Activated naive CD4-positive, alpha-beta T cell treated with anti-CD3 and anti-CD28 coated beads, Interleukin-2, amount 10 ng/mL, durations not matched to agents 7 days and 5 days (primary cell): ENCODE measurements at regions of chr10 and their contacts with region 1.

Region 1: GRCh38 chr10:13440185-13441061 is 88.4 kb downstream of the BEND7 start:
- DNase-seq: peak; percentile 69
- H3K4me3 Mint-ChIP-seq: peak overlapping the region; percentile 33
- H3K27ac Mint-ChIP-seq: no peak overlapping the region
- H3K4me1 Mint-ChIP-seq: peaks cover 14% of the 10 kb centered on the region
- H3K27me3 Mint-ChIP-seq: peaks cover 50% of the 10 kb centered on the region

Region 2: GRCh38 chr10:13371897-13372470 is 68.4 kb before region 1 on chr10:
- CTCF ChIA-PET with region 1: interaction called, 51 read pairs
- DNase-seq: peak; percentile 80
- H3K4me3 Mint-ChIP-seq: no peak overlapping the region
- H3K27ac Mint-ChIP-seq: no peak overlapping the region
- H3K4me1 Mint-ChIP-seq: no peaks in the 10 kb centered on the region
- H3K27me3 Mint-ChIP-seq: peaks cover 4% of the 10 kb centered on the region

Region 3: DNA sequence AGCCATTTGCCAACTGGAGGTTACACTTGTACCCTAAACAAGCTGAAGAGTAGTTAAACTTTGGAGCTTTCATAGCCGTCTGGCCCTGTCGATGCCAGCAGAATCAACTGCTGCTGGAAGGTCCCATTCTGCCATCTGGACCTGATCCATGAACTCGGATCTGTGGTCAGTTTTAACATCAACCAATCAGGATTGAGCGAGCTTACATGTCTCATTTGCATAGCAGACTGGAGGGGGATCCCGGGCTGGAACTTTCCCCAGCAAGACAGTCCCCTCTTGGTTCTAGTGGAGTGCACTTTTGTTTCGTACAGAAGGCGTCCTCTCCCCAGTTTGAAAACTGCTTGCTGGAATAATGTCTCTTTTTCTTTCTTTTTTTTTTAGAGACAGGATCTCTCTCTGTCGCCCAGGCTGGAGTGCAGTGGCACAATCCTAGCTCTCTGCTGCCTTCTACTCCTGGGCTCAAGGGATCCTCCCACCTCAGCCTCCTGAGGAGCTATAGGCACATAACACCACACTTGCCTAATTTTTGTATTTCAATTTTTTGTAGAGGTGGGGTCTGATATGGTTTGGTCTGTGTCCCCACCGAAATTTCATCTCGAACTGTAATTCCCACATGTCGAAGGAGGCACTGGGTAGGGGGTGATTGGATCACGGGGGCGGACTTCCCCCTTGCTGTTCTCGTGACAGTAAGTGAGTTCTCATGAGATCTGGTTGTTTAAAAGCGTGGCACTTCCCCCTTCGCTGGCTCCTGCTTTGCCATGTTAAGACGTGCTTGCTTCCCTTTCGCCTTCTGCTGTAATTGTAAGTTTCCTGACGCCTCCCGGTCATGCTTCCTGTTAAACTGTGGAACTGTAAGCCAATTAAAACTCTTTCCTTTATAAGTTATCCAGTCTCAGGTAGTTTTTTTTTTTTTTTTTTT is 49.6 kb before region 1 on chr10:
- CTCF ChIA-PET with region 1: no interaction called
- DNase-seq: no peak
- H3K4me3 Mint-ChIP-seq: no peak overlapping the region
- H3K27ac Mint-ChIP-seq: no peak overlapping the region
- H3K4me1 Mint-ChIP-seq: no peaks in the 10 kb centered on the region
- H3K27me3 Mint-ChIP-seq: peaks cover 25% of the 10 kb centered on the region

Region 4: GRCh38 chr10:13453896-13454295 is 13.5 kb after region 1 on chr10:
- CTCF ChIA-PET with region 1: interaction called, 14 read pairs
- DNase-seq: peak; percentile 51
- H3K4me3 Mint-ChIP-seq: no peak overlapping the region
- H3K27ac Mint-ChIP-seq: no peak overlapping the region
- H3K4me1 Mint-ChIP-seq: peaks cover 5% of the 10 kb centered on the region
- H3K27me3 Mint-ChIP-seq: peaks cover 20% of the 10 kb centered on the region